AG04449 (cell line): ENCODE measurements at regions of chr12 and their contacts with region 1.

Region 1: DNA sequence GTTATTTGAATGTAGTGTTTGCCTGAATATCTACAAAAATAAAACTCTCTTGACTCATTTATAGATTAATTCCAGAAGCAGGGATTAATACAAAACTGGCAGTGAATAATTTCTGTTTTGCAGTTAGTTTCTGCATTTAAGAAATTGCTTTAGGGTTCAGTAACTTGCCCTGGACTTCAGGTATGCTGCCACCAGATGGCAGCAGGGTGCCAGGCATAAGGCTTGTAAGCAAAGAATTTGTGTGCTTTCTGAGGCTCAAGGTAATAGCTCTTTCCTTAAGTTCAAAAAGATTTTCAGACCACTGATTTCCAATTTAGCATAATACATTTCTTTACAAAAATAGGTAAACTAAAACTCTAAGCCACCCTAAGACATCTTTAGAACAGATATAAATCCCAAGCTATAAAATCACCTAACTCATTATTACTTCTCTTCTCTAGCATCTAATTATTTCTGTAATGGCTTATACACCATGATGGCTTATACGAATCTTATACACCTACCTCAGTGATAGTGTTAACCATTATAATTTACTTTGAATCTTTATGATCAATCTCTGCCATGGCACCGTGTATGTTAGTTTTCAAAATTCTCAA is 398.3 kb downstream of the APAF1 start:
- DNase-seq: peak; percentile 23
- H3K4me3 ChIP-seq: no peak overlapping the region
- CTCF ChIP-seq: peak; percentile 75

Region 2: GRCh38 chr12:98456576-98457573 is 586.5 kb before region 1 on chr12:
- CTCF ChIA-PET with region 1: no interaction called
- POLR2A ChIA-PET with region 1: no interaction called
- DNase-seq: no peak
- H3K4me3 ChIP-seq: peak overlapping the region; percentile 50
- CTCF ChIP-seq: no peak

Region 3: GRCh38 chr12:99026332-99027054 is 16.9 kb before region 1 on chr12:
- CTCF ChIA-PET with region 1: interaction called, 15 read pairs
- POLR2A ChIA-PET with region 1: no interaction called
- DNase-seq: no peak
- H3K4me3 ChIP-seq: no peak overlapping the region
- CTCF ChIP-seq: no peak

Region 4: DNA sequence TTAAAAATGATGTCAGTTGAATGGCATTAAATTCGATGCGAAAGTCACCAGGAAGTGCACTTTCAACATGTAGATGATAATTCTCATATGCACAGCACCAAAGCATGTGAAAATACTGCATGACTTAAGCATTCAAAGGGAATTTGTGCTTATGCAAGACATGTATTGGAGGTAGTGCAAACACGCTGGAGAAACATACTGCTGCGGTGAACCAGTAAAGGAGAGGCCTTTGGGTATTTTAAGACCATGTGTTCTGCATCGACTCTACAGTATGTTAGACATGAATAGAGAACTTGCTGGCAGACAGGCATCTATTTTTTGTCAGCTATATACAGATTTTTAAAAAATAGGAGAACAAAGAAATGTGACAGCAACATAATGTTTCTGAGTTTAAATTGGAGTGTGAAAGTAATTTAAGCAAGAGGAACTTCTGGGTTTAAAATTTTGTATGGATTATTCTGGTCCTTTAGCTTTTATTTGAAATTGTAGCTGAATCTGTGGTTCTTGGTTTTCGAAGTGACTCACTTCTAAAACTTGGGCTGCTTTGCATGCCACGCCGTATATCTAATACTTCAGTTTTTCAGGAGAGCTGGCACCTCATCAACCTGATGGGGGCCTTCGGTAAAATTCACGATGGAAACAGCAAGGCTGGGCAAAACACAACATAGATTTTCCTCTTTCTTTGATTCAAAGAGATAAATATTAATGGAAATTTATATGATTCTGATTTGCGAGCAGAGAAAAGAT is 10.4 kb after region 1 on chr12:
- CTCF ChIA-PET with region 1: interaction called, 20 read pairs
- POLR2A ChIA-PET with region 1: no interaction called
- DNase-seq: peak; percentile 10
- H3K4me3 ChIP-seq: no peak overlapping the region
- CTCF ChIP-seq: no peak

Region 5: DNA sequence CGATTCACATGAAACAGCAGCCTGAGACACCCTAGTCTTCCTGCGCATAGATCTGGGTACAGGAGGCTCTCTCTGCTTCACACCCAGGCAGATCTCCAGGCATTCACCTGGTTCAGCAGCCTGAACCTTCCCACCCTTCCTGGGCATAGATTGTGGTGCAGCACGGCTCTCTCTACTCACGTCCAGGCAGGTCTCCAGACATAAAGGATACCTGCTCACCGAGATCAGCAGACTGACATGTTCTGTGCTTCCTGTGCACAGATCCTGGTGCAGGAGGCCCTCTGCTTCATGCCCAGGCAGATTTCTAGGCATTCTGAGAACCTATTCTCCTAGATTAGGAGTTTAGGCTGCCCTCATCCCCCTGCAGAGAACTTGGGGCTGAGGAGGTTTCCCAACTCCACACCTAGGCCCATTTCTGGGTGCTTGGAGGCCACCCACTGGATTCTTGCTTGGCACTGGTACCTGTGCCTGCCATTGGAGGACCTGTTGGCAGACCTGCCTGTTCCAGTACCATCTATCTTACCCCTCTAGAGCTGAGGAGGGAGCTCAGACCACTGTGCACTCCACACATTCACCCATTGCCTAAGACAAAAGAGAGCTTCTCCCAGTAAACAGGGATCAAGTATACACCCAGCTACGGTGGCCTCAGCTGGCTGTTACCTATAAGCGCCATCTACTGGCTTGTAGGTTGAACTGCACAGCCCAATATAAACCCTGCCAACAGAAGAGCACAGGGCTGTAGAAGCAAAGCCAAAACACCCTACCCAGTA is 576.2 kb after region 1 on chr12:
- CTCF ChIA-PET with region 1: interaction called, 16 read pairs
- POLR2A ChIA-PET with region 1: no interaction called
- DNase-seq: no peak
- H3K4me3 ChIP-seq: no peak overlapping the region
- CTCF ChIP-seq: peak; percentile 58

Region 6: GRCh38 chr12:99658671-99659349 is 615.4 kb after region 1 on chr12:
- CTCF ChIA-PET with region 1: interaction called, 58 read pairs
- POLR2A ChIA-PET with region 1: no interaction called
- DNase-seq: no peak
- H3K4me3 ChIP-seq: no peak overlapping the region
- CTCF ChIP-seq: no peak

Region 7: DNA sequence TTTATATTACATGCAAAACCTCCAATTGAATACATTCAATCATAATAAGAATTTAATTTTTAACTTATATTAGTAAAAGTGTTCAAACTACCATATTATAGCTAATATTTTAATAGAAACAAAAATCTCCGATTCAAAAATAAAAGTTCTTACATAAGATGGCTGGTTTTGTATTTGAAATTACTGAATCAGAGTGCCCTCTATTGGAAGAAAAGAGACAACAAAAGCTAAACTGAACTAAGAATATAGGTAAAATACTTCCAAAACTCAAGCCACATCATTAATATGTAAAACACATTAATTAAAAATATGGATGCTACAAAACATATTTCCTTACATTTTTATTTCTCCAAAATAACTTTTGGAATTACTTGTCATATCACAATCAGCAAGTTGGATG is 724.4 kb after region 1 on chr12:
- CTCF ChIA-PET with region 1: interaction called, 47 read pairs
- POLR2A ChIA-PET with region 1: no interaction called
- DNase-seq: no peak
- H3K4me3 ChIP-seq: no peak overlapping the region
- CTCF ChIP-seq: peak; percentile 21